BJ (cell line): ENCODE measurements at regions of chr3 and their contacts with region 1.

Region 1: DNA sequence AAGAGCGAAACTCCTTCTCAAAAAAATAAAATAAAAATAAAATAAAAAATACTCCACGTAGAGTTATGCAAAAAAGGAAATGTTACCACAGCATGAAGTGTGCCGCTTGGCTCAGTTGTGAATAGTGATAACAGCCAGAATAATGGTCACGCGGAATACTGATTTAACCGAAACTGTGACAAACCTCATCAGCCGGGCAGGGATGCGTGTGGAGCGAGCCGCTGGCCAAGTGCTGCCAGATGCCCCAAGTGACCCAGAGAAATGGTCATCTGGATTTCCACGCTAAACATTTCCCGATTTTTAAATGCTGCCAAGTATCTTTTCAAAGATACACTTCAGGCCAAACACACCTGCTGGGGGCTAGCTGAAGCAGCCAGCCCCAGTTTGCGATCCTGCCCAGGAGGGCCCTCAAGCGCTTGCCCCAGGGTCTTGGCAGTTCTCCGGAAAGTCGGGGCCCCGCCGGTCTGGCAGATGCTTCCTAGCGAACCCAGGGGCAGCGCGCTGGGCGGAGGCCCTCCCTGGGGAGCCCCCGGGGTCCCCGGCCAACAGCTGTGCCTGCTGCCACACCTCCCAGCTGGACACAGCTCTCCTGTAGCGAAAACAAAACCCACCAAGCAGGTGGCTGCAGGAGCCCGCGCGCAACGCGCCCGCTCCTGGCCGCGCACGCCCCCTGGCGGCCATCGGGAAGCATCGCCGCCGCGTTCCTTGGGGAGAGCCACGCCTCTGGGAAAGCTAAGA is 35.1 kb downstream of the CMTM6 start:
- DNase-seq: no peak
- H3K4me3 ChIP-seq: peak overlapping the region; percentile 30
- H3K27me3 ChIP-seq: no peaks in the 10 kb centered on the region
- CTCF ChIP-seq: peak; percentile 87

Region 2: DNA sequence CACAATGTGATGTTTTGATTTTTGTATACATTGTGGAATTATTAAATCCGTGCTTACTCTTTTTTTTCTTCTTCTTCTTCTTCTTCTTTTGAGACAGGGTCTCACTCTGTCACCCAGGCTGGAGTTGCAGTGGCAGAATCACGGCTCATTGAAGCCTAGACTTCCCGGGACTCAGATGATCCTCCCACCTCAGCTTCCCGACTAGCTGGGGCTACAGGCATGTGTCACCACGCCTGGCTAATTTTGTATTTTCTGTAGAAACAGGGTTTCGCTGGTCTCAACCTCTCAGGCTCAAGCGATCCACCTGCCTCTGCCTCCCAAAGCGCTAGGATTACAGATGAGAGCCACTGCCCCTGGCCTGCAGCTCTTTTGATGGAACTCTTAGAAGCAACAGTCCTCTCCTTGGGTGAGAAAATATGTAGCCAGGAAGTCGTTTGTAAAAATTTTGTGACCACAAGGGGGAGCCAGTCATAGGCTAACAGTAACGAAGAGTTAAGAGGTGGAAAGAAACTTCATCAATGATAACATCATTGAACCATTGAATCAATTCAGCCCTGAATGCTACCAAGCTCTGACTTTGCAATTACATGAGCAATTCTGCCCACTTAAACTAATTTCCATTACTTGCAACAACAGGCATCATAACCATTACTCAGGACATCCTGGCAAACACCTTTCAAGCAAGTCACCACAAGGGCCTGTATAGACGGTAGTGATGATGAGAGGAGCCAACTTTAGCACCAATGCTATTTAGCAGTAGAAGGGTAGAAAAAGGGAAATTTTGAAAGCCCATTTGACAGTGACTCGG is 92.5 kb before region 1 on chr3:
- CTCF ChIA-PET with region 1: interaction called, 86 read pairs
- POLR2A ChIA-PET with region 1: no interaction called
- DNase-seq: no peak
- H3K4me3 ChIP-seq: no peak overlapping the region
- H3K27me3 ChIP-seq: no peaks in the 10 kb centered on the region; the same call in 1 of the 2 replicates
- CTCF ChIP-seq: peak; percentile 65

Region 3: GRCh38 chr3:32399030-32399620 is 68.4 kb before region 1 on chr3:
- CTCF ChIA-PET with region 1: interaction called, 12 read pairs
- POLR2A ChIA-PET with region 1: no interaction called
- DNase-seq: no peak
- H3K4me3 ChIP-seq: no peak overlapping the region
- H3K27me3 ChIP-seq: no peaks in the 10 kb centered on the region
- CTCF ChIP-seq: peak; percentile 67

Region 4: GRCh38 chr3:32436816-32437189 is 30.7 kb before region 1 on chr3:
- CTCF ChIA-PET with region 1: interaction called, 11 read pairs
- POLR2A ChIA-PET with region 1: no interaction called
- DNase-seq: no peak
- H3K4me3 ChIP-seq: no peak overlapping the region
- H3K27me3 ChIP-seq: no peaks in the 10 kb centered on the region
- CTCF ChIP-seq: no peak

Region 5: GRCh38 chr3:32484436-32484835 is 16.9 kb after region 1 on chr3:
- CTCF ChIA-PET with region 1: interaction called, 10 read pairs
- POLR2A ChIA-PET with region 1: no interaction called
- DNase-seq: no peak
- H3K4me3 ChIP-seq: no peak overlapping the region
- H3K27me3 ChIP-seq: no peaks in the 10 kb centered on the region
- CTCF ChIP-seq: no peak